ENCODE measurements at regions of chr19 and their contacts with region 1.

Region 1: DNA sequence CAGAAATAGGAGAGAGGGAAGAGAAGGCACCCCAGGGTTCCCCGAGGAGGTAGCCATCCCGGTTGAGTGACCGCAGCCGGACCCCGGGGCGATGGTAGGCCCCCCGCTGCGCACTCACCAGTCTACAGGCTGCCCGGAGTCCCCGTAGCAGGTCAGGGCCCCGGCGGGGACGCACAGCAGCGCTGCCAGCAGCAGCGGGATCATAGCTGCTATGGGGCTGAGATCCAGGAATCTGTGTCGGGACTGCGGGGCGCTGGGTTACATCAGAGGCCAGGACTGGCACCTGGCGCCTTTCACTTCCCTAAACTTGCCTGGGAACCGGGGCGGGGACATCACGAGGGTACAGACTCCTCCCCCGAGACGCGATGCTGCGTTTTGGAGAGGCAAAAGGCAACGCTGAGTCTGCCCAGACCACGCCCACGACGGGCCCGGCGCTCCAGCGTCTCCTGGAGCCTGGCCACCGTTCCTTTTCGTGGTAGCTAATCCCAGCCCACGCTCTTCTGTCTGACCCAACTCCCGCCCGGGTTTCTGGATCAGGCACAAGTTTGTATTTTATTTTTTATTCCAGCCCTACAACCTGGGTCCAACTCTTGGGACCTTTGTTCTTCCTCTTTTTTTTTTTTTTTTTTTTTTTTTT is at the start of gene DNASE2:
- DNase-seq: peak; percentile 91
- ATAC-seq: peak; percentile 69
- H3K4me3 Mint-ChIP-seq: peak within 1 kb of the TSS; percentile 94
- H3K27ac Mint-ChIP-seq: peak within 1 kb of the TSS; percentile 88
- H3K4me1 Mint-ChIP-seq: peaks cover 21% of the 10 kb centered on the region
- H3K27me3 Mint-ChIP-seq: no peaks in the 10 kb centered on the region
- total RNA-seq, gene DNASE2: 29.0 to 30.4 TPM

Region 2: GRCh38 chr19:12825254-12826131 is 55.8 kb before region 1 on chr19:
- POLR2A ChIA-PET with region 1: no interaction called
- DNase-seq: peak; percentile 43
- ATAC-seq: peak; percentile 32
- H3K4me3 Mint-ChIP-seq: peak overlapping the region; percentile 54
- H3K27ac Mint-ChIP-seq: no peak overlapping the region
- H3K4me1 Mint-ChIP-seq: peaks cover 6% of the 10 kb centered on the region
- H3K27me3 Mint-ChIP-seq: peaks cover 43% of the 10 kb centered on the region

Region 3: DNA sequence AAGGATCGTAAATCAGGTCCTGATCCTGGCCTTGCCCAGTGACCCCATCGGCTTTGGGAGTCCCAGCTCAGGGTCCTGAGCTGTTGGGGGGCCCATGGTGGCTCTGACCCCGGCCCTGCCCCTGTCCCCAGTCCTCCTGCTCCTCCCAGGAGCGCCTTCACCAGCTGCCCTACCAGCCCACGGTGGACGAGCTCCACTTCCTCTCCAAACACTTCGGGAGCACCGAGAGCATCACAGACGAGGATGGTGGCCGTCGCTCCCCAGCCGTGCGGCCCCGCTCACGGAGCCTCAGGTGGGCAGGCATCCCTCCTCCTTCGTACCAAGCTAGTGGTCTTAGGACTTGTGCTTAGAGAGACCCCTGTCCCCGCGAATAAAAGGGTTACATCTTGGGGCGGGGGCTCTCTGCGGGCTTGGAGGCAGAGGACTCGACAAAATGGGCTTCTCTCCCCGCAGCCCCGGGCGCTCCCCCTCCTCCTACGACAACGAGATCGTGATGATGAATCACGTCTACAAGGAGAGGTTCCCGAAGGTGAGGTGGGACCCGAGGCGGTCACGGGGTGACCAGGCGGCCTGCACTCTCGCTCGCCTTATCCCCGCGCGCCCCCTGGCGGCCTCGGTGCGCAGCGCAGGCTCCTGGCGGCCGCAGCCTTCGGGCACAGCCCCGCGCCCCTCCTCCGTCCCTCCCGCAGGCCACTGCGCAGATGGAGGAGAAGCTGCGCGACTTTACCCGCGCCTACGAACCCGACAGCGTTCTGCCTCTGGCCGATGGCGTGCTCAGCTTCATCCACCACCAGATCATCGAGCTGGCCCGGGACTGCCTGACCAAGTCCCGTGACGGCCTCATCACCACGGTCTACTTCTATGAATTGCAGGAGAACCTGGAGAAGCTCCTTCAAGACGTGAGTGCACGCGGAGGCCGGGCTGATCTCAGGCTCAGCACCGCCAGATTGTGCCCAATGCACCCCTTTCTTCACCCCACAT is 33.8 kb before region 1 on chr19:
- POLR2A ChIA-PET with region 1: no interaction called
- DNase-seq: peak; percentile 95
- ATAC-seq: peak; percentile 94
- H3K4me3 Mint-ChIP-seq: peak overlapping the region; percentile 61
- H3K27ac Mint-ChIP-seq: no peak overlapping the region
- H3K4me1 Mint-ChIP-seq: peaks cover 2% of the 10 kb centered on the region
- H3K27me3 Mint-ChIP-seq: peaks cover 27% of the 10 kb centered on the region

Region 4: GRCh38 chr19:12913011-12913561 is 31.8 kb after region 1 on chr19:
- POLR2A ChIA-PET with region 1: interaction called, 12 read pairs
- DNase-seq: no peak
- ATAC-seq: no peak
- H3K4me3 Mint-ChIP-seq: no peak overlapping the region
- H3K27ac Mint-ChIP-seq: peak overlapping the region; percentile 73
- H3K4me1 Mint-ChIP-seq: peaks cover 25% of the 10 kb centered on the region
- H3K27me3 Mint-ChIP-seq: no peaks in the 10 kb centered on the region

Region 5: DNA sequence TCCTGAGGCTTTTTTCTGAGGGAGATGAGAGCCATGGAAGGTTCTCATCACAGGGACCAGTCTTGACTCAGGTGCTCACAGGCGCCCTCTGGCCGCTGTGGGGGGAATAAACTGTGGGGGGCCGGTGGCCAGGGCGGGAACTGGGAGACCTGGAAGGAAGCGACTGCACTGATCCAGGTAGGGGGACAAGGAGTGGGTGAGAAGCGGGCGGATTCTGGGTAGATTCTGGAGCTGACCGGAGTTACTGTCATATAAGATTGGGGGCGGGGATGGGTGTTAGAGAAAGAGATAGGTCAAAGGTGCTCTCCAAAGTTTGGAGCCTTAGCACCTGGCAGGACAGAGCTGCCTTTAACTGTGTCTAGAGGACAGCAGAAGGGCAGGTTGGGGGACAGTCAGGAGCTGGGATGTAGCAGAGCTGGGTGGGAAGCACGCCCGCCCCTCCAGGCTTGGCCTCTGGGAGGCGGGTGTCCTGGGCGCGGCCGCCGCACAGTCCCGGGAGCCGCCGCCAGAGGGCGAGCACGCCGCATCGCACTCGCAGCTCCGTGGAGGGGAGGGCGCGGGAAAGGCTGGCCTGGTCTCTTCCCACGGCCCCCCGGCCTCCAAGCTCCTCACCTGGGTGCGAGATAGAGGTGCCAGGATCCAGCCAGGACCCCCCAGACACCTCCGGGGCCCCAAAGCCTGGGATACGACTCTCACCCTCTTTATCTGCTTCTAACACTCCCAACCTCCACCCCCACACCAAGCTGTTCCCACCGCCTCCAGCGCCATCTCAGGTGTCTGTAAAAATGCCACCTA is 83.9 kb after region 1 on chr19:
- POLR2A ChIA-PET with region 1: interaction called, 23 read pairs
- DNase-seq: peak; percentile 95
- ATAC-seq: peak; percentile 96
- H3K4me3 Mint-ChIP-seq: peak overlapping the region; percentile 88
- H3K27ac Mint-ChIP-seq: peak overlapping the region; percentile 81
- H3K4me1 Mint-ChIP-seq: peaks cover 6% of the 10 kb centered on the region
- H3K27me3 Mint-ChIP-seq: peaks cover 5% of the 10 kb centered on the region

Region 6: DNA sequence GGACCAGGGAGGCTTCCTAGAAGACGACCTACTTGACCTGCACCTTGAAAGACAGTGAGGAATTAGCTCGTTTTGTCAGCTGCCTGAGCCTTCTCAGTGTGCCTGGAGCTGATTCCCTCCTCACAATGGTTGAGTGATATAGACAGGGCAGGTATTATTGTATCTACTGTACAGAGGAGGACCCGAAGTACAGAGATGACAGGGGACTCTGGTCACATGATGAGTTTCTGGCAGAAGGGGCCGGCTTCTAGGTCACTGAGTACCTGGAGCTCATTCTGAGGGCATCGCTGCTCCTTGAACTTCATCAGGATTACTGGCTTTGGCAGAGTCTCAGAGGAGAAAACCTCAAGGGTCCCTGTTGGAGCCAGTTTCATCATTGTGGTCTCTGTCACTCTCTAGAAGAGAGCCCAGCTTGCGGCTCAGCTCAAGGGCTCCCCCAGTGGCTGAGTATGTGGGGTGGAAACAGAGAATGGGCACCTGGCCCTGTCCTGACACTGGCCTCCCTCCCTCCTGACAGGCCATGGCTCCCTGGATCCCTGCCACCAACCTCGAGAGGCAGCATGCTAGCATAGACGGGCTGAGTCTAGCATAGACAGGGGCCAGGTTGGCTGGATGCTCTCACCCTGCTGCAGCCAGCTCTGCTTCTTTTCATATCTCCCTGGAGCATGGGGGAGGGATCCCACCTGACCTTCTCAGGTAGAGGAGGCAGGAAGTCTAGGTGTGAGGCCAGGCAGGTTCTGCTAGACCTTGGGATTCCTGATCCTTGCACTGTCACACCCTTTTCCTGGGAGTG is 152.7 kb after region 1 on chr19:
- POLR2A ChIA-PET with region 1: no interaction called
- DNase-seq: peak; percentile 57
- ATAC-seq: peak; percentile 72
- H3K4me3 Mint-ChIP-seq: no peak overlapping the region
- H3K27ac Mint-ChIP-seq: no peak overlapping the region
- H3K4me1 Mint-ChIP-seq: no peaks in the 10 kb centered on the region
- H3K27me3 Mint-ChIP-seq: no peaks in the 10 kb centered on the region

Measured in activated naive CD8-positive, alpha-beta T cell treated with anti-CD3 and anti-CD28 coated beads, Interleukin-2, amount 10 ng/mL, durations not matched to agents 7 days and 5 days (primary cell).